ENCODE measurements at regions of chr21 and their contacts with region 1.

Region 1: GRCh38 chr21:45140346-45140940 is 66.1 kb downstream of the ADARB1 start:
- DNase-seq: peak; percentile 84
- H3K4me3 ChIP-seq: no peak overlapping the region
- H3K27ac ChIP-seq: no peak overlapping the region
- H3K4me1 ChIP-seq: no peaks in the 10 kb centered on the region
- CTCF ChIP-seq: peak; percentile 88

Region 2: DNA sequence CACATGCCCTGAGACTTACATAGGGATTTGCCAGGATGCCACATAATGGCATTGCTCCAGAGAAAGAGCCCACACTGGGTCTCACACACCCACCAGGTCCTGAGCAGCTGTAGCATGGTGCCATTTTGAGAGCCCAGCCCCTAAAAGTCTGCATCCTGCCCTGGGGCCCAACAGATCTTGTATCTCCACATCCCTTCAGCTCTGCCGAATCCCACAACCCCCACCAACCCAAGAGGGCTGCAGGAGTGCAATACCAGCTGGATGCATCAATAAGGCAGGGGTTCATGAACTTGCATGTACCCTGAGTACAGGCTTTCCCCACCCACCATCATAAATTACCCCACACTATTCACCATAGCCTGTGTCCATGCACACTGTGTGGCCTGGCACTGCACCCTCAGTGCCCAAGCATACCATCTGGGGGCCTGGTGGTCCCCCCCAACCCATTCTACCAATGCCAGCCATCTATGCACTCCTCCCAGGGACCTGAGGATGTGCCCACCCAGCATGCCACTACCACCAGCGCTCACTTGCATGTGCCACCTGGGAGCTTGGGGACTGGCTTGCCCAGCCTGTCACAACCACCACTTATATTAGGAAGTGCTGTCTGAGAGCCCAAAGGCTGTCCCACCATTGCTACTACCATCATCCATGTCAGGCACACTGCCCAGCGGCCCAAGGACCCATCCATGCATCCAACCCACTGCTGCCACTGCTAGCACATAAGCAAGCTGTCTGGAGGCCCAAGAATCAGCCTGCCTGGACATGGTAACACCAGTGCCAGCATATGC is 469.6 kb before region 1 on chr21:
- CTCF ChIA-PET with region 1: no interaction called
- POLR2A ChIA-PET with region 1: no interaction called
- intact Hi-C with region 1: no loop called
- DNase-seq: no peak
- H3K4me3 ChIP-seq: no peak overlapping the region
- H3K27ac ChIP-seq: no peak overlapping the region
- H3K4me1 ChIP-seq: no peaks in the 10 kb centered on the region
- CTCF ChIP-seq: no peak

Region 3: GRCh38 chr21:44854664-44855446 is 285.6 kb before region 1 on chr21:
- CTCF ChIA-PET with region 1: no interaction called
- POLR2A ChIA-PET with region 1: no interaction called
- intact Hi-C with region 1: no loop called
- DNase-seq: no peak
- H3K4me3 ChIP-seq: no peak overlapping the region
- H3K27ac ChIP-seq: no peak overlapping the region
- H3K4me1 ChIP-seq: no peaks in the 10 kb centered on the region
- CTCF ChIP-seq: no peak

Region 4: GRCh38 chr21:44949779-44950198 is 190.7 kb before region 1 on chr21:
- CTCF ChIA-PET with region 1: interaction called, 3 read pairs
- POLR2A ChIA-PET with region 1: no interaction called
- intact Hi-C with region 1: loop called (anchors 1 kb)
- DNase-seq: peak; percentile 63
- H3K4me3 ChIP-seq: no peak overlapping the region
- H3K27ac ChIP-seq: no peak overlapping the region
- H3K4me1 ChIP-seq: no peaks in the 10 kb centered on the region
- CTCF ChIP-seq: peak; percentile 82

Region 5: GRCh38 chr21:45098867-45099266 is 41.6 kb before region 1 on chr21:
- CTCF ChIA-PET with region 1: interaction called, 8 read pairs
- POLR2A ChIA-PET with region 1: interaction called, 3 read pairs
- intact Hi-C with region 1: loop called (anchors 2 kb)
- DNase-seq: peak; percentile 56
- H3K4me3 ChIP-seq: no peak overlapping the region
- H3K27ac ChIP-seq: no peak overlapping the region
- H3K4me1 ChIP-seq: peaks cover 13% of the 10 kb centered on the region
- CTCF ChIP-seq: peak; percentile 82

Region 6: GRCh38 chr21:45309069-45309986 is 168.9 kb after region 1 on chr21:
- CTCF ChIA-PET with region 1: no interaction called
- POLR2A ChIA-PET with region 1: no interaction called
- intact Hi-C with region 1: loop called (anchors 1 kb)
- DNase-seq: peak; percentile 22
- H3K4me3 ChIP-seq: no peak overlapping the region
- H3K27ac ChIP-seq: no peak overlapping the region
- H3K4me1 ChIP-seq: no peaks in the 10 kb centered on the region
- CTCF ChIP-seq: peak; percentile 81

Region 7: GRCh38 chr21:45439161-45439872 is 298.9 kb after region 1 on chr21:
- CTCF ChIA-PET with region 1: no interaction called
- POLR2A ChIA-PET with region 1: no interaction called
- intact Hi-C with region 1: loop called (anchors 1 kb)
- DNase-seq: peak; percentile 65
- H3K4me3 ChIP-seq: no peak overlapping the region
- H3K27ac ChIP-seq: no peak overlapping the region
- H3K4me1 ChIP-seq: no peaks in the 10 kb centered on the region
- CTCF ChIP-seq: peak; percentile 82